ENCODE measurements at regions of chr5 and their contacts with region 1.

Region 1: GRCh38 chr5:90709323-90710155 is 150.9 kb downstream of the ADGRV1 start:
- DNase-seq: peak in 4 of 10 donors; percentile 22 to 37 (median 32)
- H3K4me3 ChIP-seq: no peak overlapping the region
- H3K27ac ChIP-seq: no peak overlapping the region
- H3K27me3 ChIP-seq: no peaks in the 10 kb centered on the region
- CTCF ChIP-seq: peak; percentile 31 to 74 (median 58)

Region 2: DNA sequence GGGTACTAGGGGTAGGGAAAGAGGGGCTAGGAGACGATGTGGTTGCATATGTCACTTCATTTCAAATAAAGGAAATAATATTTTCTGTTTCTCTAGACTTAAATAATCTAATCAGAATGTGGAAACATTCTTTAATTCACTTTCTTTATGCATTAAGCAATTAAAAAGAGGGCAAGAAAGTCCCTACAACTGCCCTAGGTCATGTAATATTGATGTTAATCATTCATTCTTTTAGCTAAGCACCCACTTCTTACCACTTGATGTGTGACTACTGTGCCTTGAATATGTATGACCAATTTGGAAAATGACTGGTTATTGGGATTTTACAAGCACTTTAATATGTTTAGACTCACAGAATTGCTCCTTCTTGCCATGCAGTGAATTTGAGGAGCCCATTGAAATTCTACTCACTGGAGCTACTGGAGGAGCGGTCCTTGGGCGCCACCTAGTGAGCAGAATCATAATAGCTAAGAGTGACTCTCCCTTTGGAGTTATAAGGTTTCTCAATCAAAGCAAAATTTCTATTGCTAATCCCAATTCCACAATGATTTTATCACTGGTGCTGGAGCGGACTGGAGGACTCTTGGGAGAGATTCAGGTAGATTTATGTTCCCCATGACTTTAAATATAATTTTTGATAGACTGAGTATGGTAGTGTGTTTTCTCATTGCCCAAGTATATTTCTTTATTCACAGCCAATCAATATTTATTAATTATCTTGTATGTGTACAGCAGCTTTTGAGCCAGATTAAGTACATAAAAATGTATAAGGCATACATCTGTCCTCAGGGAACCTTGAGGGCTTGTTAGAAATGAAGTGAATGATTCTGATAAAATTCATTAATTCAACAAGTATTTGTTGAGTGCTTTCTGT is 74.2 kb after region 1 on chr5:
- intact Hi-C with region 1: loop called in 1 of 2 experiments (anchors 5 kb)
- DNase-seq: peak in 9 of 10 donors; percentile 37 to 82 (median 68)
- H3K4me3 ChIP-seq: no peak overlapping the region
- H3K27ac ChIP-seq: no peak overlapping the region
- H3K27me3 ChIP-seq: no peaks in the 10 kb centered on the region
- CTCF ChIP-seq: peak; percentile 76 to 96 (median 88)

Measured in dorsolateral prefrontal cortex (tissue), 120 donors.